ENCODE measurements at regions of chr17 and their contacts with region 1.

Region 1: DNA sequence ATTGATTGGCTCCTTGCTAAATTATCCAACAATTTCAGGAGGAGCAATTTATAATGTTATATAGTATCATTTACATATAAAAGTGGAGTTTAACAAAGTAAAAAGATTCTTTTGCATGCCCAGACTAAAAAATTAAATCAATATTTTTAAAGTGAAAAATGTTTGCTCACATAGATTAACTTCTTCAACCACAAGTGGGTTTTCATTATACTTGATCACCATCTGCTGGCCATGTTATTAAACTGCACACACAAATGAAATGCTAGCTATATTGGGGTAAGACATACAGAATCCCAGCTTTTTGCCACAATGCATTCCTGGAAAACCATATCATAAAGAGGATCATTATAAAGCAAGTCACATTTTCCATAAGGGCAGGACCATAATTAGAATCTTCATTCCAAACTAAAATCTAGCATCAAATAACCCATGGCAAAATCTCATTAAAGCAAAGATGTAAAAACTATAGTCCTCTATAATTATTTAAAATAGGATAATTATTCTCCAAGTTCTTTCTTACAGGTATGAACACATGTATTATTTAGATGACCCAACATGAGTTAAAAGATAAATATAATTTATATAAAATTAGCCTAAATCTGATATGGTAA is 26.3 kb downstream of the CEP112 start:
- DNase-seq: peak; percentile 32
- H3K4me3 ChIP-seq: no peak overlapping the region
- H3K27ac ChIP-seq: no peak overlapping the region
- H3K27me3 ChIP-seq: no peaks in the 10 kb centered on the region
- CTCF ChIP-seq: peak; percentile 68

Region 2: DNA sequence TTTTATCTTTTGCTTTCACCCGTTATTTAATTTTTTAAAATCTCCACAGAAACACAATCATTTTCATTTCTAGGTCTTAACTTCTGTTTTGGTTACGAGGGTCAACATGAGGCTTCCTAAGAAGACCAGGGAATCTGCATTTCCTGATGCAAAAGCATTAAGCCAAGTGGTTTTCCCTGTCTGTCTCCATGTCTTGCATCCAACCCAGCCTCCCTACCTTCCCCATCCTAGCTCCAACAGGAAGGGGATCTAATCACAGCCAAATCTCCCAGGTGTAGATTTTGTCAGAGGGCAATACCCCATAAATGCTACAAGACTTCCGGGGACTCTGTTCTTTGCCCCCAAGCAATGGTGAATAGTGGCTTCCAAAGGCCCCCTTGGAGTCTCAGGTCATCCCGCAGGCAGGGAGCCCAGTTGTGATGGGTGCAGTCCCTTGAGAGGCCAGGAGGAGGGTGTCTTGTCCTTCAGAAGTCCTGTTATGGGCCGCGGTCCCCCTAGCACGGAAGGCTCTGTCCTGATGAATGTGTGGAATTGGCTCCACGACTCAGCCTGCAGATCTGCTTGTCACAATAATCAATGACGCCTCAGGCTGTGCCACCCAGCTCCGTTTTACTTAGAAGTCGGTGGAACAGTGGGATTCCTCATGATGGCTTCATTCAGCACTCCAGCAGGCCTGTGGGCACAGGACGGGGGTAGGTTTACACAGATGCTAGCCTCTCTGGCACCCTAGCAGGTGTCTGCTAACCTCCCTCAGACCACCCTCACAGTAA is 887.4 kb before region 1 on chr17:
- CTCF ChIA-PET with region 1: interaction called, 23 read pairs
- POLR2A ChIA-PET with region 1: interaction called, 3 read pairs
- DNase-seq: no peak
- H3K4me3 ChIP-seq: no peak overlapping the region; the same call in 1 of the 2 replicates
- H3K27ac ChIP-seq: no peak overlapping the region
- H3K27me3 ChIP-seq: peaks cover 7% of the 10 kb centered on the region
- CTCF ChIP-seq: peak; percentile 79

Region 3: DNA sequence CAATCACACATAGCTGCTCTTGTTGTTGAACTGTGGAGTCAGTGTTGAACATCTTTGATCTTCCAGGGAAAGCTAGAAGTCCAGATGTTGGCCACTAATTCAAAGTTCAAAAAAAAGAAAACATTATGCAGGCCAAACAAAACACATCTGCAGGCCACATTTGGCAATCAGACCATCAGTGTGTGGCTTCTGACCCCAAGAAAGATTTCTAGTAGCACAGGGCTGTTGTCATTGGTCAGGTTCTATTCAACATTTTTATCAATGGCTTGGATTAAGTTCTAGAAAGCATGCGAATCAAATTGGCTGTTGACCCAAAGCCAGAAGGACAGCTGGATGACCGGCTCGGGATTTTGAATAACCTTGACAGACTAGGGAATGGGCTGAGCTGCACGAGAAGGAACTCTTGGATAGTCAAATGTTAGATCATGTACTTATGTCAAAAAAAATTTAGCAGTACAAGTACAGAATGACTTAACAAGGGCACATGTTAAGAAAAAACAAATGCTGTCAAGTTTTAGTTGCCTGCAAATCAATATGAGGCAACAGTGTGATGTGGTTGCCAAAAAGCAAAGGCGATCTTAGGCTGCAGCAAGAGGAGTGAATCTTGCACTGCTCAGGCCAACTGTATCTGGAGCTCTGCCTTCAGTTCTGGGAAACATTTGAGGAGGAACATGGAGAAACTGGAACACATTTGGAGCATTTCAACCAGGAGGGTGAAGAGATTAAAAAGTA is 840.8 kb before region 1 on chr17:
- CTCF ChIA-PET with region 1: no interaction called
- POLR2A ChIA-PET with region 1: no interaction called
- DNase-seq: no peak
- H3K4me3 ChIP-seq: no peak overlapping the region
- H3K27ac ChIP-seq: no peak overlapping the region
- H3K27me3 ChIP-seq: peaks cover 4% of the 10 kb centered on the region
- CTCF ChIP-seq: no peak

Region 4: DNA sequence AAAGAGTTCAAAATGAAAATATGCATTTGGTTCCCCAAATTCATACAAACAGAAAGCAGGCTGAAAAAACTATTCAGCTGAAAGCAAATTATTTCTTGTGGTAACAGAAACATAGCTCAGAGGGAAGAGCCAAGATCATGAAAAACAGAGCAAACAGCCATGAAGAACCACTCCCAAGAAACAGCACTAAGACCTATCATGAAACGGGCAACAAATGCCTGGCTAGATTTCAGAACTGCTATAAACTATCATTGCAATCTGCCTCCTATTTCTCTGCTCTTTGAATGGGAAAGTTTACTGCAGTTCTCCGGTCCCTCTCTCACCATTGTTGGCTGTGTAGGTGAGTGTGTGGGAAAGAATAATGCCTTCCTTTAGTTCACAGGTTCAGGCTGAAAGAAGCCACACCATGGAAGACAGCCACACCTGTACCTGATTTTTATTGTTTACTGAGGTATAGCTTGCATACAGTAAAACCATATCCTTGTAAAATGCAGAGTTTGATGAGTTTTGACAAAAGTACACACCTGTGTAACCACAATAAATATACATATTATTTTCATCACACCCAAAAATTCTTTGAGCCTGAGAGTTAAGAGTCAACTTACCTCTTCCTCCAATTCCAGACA is 21.8 kb before region 1 on chr17:
- CTCF ChIA-PET with region 1: interaction called, 13 read pairs
- POLR2A ChIA-PET with region 1: no interaction called
- DNase-seq: no peak
- H3K4me3 ChIP-seq: no peak overlapping the region
- H3K27ac ChIP-seq: no peak overlapping the region
- H3K27me3 ChIP-seq: no peaks in the 10 kb centered on the region
- CTCF ChIP-seq: no peak

Region 5: GRCh38 chr17:66177048-66177447 is 11.4 kb after region 1 on chr17:
- CTCF ChIA-PET with region 1: no interaction called
- POLR2A ChIA-PET with region 1: no interaction called
- DNase-seq: no peak
- H3K4me3 ChIP-seq: no peak overlapping the region
- H3K27ac ChIP-seq: no peak overlapping the region
- H3K27me3 ChIP-seq: no peaks in the 10 kb centered on the region
- CTCF ChIP-seq: no peak

Region 6: GRCh38 chr17:66420961-66421371 is 255.3 kb after region 1 on chr17:
- CTCF ChIA-PET with region 1: no interaction called
- POLR2A ChIA-PET with region 1: no interaction called
- DNase-seq: no peak
- H3K4me3 ChIP-seq: no peak overlapping the region
- H3K27ac ChIP-seq: peak overlapping the region; percentile 70
- H3K27me3 ChIP-seq: no peaks in the 10 kb centered on the region
- CTCF ChIP-seq: no peak

Measured in AG04450 (cell line).